Activated CD8-positive, alpha-beta T cell treated with anti-CD3 and anti-CD28 coated beads for 36 hours (primary cell): ENCODE measurements at regions of chr3 and their contacts with region 1.

Region 1: DNA sequence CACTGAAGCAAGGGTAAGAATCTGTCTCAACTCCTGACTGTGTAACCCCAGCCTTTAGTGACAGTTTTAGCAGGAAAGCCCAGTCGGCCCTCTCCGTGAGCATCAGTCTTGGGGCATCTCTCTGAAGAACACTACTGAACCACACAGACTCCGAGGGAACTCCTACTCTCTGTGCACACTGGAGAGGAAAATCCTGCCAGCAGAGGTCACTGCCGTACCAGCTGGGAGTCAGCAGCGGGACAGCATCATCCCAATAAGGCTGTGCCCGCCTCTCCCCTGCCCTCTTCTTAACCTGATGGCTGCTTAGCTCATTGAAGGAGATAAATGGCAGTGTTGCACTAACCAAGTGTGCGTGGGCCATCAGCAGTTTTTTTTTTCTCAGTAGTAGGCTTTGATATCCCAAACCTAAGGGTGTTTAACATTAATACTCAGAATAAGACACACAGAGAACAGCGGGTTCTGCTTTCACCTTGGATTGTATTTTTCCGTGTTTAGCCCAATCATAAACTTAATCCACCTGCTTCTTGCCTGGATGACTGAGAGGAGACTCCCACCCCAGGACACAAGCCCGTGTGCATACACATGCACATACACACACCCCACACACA is 26.6 kb upstream of the RASA2 start:
- DNase-seq: peak; percentile 96
- ATAC-seq: peak; percentile 100
- H3K4me3 Mint-ChIP-seq: no peak overlapping the region
- H3K27ac Mint-ChIP-seq: no peak overlapping the region
- H3K4me1 Mint-ChIP-seq: peaks cover 11% of the 10 kb centered on the region
- H3K27me3 Mint-ChIP-seq: no peaks in the 10 kb centered on the region
- CTCF ChIP-seq: peak; percentile 93

Region 2: DNA sequence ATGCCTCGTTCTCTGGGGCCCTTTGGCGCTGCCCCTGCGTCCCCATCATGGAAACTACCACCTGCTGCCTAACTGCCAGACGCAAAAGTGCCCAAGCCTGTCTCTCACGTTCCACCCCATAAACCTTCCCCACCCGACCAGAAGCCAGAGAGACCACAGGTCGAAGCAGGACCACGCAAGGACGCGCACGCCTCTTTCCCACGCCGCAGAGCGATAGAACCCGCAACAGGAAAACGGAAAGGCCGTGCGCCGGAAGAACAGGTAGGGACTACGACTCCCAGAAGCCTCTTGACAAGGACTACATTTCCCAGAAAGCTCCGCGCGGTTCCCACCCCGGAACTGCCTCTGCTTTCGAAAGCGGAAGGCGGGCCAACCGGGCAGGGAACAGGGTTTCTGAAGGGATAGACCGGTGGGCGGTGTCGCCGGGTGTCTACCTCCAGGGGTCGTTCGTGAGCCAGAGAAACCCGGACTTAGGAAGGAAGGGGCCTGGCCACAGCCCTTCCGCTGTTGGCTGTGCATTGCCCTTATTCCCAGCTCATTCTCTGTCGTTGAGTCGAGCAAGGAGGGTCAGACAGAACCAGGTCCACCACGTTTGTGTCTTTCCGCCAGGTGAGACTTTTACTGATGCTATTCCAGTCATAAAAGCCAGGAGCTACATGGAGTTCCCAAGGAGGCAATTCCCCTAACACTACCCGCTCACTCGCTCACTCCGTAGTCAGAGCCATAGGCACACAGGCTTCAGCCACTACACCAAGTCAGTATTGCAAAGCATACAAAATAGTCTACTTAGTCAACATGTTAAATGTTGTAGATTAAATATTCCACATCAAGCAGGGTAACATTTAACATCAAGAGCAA is 148.5 kb before region 1 on chr3:
- CTCF ChIA-PET with region 1: interaction called, 418 read pairs
- POLR2A ChIA-PET with region 1: interaction called, 7 read pairs
- intact Hi-C with region 1: no loop called
- DNase-seq: peak; percentile 99
- ATAC-seq: peak; percentile 94
- H3K4me3 Mint-ChIP-seq: peak overlapping the region; percentile 89
- H3K27ac Mint-ChIP-seq: peak overlapping the region; percentile 99
- H3K4me1 Mint-ChIP-seq: peaks cover 49% of the 10 kb centered on the region
- H3K27me3 Mint-ChIP-seq: no peaks in the 10 kb centered on the region
- CTCF ChIP-seq: peak; percentile 77

Region 3: GRCh38 chr3:141360888-141361598 is 99.2 kb before region 1 on chr3:
- CTCF ChIA-PET with region 1: interaction called, 112 read pairs
- POLR2A ChIA-PET with region 1: interaction called, 3 read pairs
- intact Hi-C with region 1: no loop called
- DNase-seq: no peak
- ATAC-seq: peak; percentile 84
- H3K4me3 Mint-ChIP-seq: no peak overlapping the region
- H3K27ac Mint-ChIP-seq: no peak overlapping the region
- H3K4me1 Mint-ChIP-seq: peaks cover 5% of the 10 kb centered on the region
- H3K27me3 Mint-ChIP-seq: no peaks in the 10 kb centered on the region
- CTCF ChIP-seq: peak; percentile 77

Region 4: GRCh38 chr3:141477224-141477623 is 17.0 kb after region 1 on chr3:
- CTCF ChIA-PET with region 1: interaction called, 31 read pairs
- POLR2A ChIA-PET with region 1: no interaction called
- intact Hi-C with region 1: no loop called
- DNase-seq: peak; percentile 24
- ATAC-seq: peak; percentile 64
- H3K4me3 Mint-ChIP-seq: no peak overlapping the region
- H3K27ac Mint-ChIP-seq: no peak overlapping the region
- H3K4me1 Mint-ChIP-seq: peaks cover 40% of the 10 kb centered on the region
- H3K27me3 Mint-ChIP-seq: no peaks in the 10 kb centered on the region
- CTCF ChIP-seq: no peak

Region 5: DNA sequence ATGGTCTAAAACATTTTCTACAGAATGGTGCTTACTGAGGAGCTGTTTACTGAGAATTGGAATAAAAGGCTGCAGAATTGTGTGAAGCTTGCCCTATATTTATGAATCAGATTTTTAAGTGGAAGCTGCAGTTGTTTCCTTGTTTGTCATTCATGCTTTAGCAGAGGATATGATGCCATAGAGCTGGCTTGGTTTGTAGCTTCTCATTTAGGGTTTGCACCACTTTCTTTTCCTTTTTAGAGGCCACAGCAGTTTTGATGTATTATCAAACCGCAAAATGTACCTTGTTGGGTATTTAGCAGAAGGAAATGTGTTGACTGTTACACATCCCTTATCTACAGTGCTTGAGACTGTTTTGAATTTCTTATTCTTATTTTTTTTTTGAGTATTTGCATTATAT is 92.9 kb after region 1 on chr3:
- CTCF ChIA-PET with region 1: interaction called, 265 read pairs
- POLR2A ChIA-PET with region 1: interaction called, 4 read pairs
- intact Hi-C with region 1: no loop called
- DNase-seq: peak; percentile 25
- ATAC-seq: peak; percentile 71
- H3K4me3 Mint-ChIP-seq: peak overlapping the region; percentile 2
- H3K27ac Mint-ChIP-seq: peak overlapping the region; percentile 91
- H3K4me1 Mint-ChIP-seq: peaks cover 56% of the 10 kb centered on the region
- H3K27me3 Mint-ChIP-seq: no peaks in the 10 kb centered on the region
- CTCF ChIP-seq: no peak

Region 6: DNA sequence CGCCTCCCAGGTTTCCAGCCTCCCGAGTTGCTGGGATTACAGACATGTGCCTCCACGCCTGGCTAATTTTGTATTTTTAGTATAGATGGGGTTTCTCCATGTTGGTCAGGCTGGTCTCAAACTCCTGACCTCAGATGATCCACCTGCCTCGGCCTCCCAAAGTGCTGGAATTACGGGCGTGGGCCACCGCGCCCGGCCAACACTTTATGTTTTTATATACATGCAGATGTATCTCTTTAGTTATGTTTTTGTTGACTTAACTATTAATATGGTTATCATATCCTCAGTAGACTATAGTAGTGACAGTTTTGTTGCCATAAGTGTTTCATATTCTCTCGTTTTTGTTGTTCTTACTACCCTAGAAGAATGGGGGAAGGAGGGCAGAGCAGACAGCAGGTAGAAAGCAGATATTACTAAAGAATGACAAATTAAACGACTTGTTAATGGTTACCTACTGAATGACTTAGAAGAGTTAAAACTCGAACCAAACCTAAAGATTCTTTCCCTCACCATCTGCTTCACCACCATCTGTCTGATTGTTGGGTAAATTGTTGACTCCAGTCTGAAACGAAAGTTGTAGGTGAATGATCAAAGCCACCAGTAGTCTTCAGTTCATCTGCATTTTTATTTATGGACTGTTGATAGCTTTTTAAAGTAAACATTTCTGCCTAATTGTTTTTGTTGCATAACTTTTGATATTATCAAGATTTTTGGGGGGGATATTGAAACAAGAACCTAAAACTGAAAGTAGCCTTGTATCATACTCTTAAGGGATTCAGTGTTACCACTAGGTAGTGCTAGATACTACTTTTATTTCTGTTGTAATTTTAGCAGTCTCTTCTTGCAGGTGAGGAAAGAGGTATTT is 115.9 kb after region 1 on chr3:
- CTCF ChIA-PET with region 1: interaction called, 15 read pairs
- POLR2A ChIA-PET with region 1: no interaction called
- intact Hi-C with region 1: no loop called
- DNase-seq: no peak
- ATAC-seq: peak; percentile 77
- H3K4me3 Mint-ChIP-seq: peak overlapping the region; percentile 21
- H3K27ac Mint-ChIP-seq: peak overlapping the region; percentile 89
- H3K4me1 Mint-ChIP-seq: peaks cover 20% of the 10 kb centered on the region
- H3K27me3 Mint-ChIP-seq: no peaks in the 10 kb centered on the region
- CTCF ChIP-seq: peak; percentile 59

Region 7: GRCh38 chr3:141644931-141645330 is 184.7 kb after region 1 on chr3:
- CTCF ChIA-PET with region 1: interaction called, 36 read pairs
- POLR2A ChIA-PET with region 1: no interaction called
- intact Hi-C with region 1: loop called (anchors 1 kb)
- DNase-seq: peak; percentile 88
- ATAC-seq: peak; percentile 98
- H3K4me3 Mint-ChIP-seq: no peak overlapping the region
- H3K27ac Mint-ChIP-seq: no peak overlapping the region
- H3K4me1 Mint-ChIP-seq: no peaks in the 10 kb centered on the region
- H3K27me3 Mint-ChIP-seq: no peaks in the 10 kb centered on the region
- CTCF ChIP-seq: peak; percentile 91